Activated naive CD4-positive, alpha-beta T cell treated with anti-CD3 and anti-CD28 coated beads for 36 hours (primary cell): ENCODE measurements at regions of chr4 and their contacts with region 1.

Region 1: DNA sequence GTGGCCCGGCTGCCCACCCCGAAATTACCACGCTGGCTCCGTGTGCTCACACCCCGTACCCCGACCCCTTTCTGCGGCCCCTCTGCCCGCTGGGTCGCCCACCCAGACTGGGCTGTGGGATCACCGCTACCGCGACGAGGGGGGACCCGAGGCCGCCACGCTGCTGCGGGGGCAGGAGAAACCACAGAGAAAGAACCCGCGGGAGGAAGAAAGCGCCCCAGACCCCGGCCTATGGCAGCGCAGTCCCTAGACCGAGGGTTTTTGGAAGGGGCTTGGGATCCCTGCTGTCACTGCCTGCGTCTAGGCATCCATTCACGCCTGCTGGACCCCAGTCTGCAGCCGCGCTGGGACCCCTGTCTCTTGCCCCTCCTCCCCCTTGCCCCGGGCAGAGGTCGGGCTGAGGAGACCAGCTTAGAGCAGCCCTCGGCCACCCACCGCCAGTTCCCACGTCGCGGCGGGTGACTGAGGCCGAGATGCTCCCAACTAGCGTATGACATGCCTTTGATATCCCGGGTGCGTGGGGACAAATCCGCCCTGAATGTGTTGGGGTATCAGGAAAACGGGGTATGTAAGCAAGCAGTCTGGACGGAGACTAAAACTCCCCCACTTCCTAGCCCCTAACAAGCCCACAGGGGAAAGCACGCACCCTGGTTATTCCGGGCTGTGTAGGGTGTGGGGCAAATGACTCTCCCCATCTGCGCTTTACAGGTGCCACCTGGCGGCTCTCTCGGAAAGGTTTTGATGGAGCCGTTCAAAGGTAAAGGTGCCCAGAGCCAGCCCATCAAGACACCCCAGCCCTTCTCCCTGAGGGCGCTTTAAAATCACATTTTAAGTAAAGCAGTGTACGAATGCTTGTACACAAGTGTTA is 862 bp upstream of the INPP4B start:
- DNase-seq: peak; percentile 90
- H3K4me3 Mint-ChIP-seq: peak overlapping the region; percentile 86
- H3K27ac Mint-ChIP-seq: peak overlapping the region; percentile 84
- H3K4me1 Mint-ChIP-seq: peaks cover 15% of the 10 kb centered on the region
- H3K27me3 Mint-ChIP-seq: no peaks in the 10 kb centered on the region

Region 2: GRCh38 chr4:140861359-140862176 is 1985.4 kb before region 1 on chr4:
- CTCF ChIA-PET with region 1: no interaction called
- intact Hi-C with region 1: loop called (anchors 1 kb)
- DNase-seq: peak; percentile 79
- H3K4me3 Mint-ChIP-seq: no peak overlapping the region
- H3K27ac Mint-ChIP-seq: no peak overlapping the region
- H3K4me1 Mint-ChIP-seq: no peaks in the 10 kb centered on the region
- H3K27me3 Mint-ChIP-seq: no peaks in the 10 kb centered on the region

Region 3: DNA sequence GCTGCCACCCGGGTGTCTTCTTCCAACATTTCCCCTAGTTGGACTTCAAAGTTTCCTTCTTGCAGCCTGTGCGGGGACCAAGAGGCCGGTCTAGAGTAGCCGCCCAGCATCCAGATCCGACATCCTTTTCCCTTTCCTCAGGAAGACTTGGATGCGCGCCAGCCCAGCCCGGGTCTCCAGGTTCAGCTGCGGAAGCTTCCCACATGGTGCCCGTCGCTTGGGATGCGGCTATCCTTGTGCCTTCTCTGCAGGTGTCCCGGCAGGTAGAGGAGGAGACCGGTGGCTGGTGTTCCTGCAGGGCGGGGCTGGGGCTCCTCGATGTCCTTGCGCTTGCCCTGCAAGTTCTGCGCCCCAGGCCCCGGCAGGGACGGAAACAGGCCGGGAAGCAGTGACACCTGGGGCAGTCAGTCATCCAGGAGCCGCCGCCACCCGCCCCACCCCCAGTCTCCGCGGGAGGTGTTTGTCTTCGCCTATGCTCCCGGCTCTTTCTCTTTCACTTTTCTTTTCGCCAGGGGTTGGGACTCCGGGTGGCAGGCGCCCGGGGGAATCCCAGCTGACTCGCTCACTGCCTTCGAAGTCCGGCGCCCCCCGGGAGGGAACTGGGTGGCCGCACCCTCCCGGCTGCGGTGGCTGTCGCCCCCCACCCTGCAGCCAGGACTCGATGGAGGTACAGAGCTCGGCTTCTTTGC is 1210.7 kb before region 1 on chr4 and contains the start of gene IL15:
- CTCF ChIA-PET with region 1: no interaction called
- intact Hi-C with region 1: loop called (anchors 5 kb)
- DNase-seq: peak; percentile 86
- H3K4me3 Mint-ChIP-seq: peak within 1 kb of the TSS; percentile 89
- H3K27ac Mint-ChIP-seq: no peak within 1 kb of the TSS
- H3K4me1 Mint-ChIP-seq: peaks cover 10% of the 10 kb centered on the region
- H3K27me3 Mint-ChIP-seq: peaks cover 9% of the 10 kb centered on the region
- total RNA-seq, gene IL15: 0.19 to 0.52 TPM

Region 4: DNA sequence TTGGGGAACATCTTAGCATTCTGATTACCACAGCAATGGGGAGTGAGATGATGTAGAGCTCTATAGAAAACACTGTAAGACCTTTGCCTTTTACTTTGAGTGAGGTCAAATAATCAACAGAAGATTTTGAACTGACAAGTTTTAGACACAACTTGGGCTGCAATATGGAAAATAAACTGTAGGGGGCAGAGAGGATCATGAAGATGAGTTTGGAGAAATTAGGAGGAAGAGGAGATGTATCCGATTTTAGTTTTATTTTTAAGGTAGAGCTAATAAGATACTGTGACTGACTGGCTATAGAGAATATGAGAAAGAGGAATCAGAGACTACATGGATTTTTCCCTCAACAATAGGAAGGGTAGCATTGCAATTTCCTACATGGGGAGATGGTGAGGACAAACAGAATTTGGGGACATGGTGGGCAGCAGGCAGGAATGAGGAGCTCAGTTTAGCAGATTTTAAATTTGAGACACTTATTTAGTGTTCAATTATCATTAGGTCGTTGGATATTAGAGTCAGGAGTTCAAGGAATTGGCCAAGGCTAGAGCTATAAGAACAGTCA is 564.0 kb before region 1 on chr4:
- CTCF ChIA-PET with region 1: interaction called, 3 read pairs
- intact Hi-C with region 1: loop called (anchors 1 kb)
- DNase-seq: peak; percentile 60
- H3K4me3 Mint-ChIP-seq: no peak overlapping the region
- H3K27ac Mint-ChIP-seq: no peak overlapping the region
- H3K4me1 Mint-ChIP-seq: peaks cover 29% of the 10 kb centered on the region
- H3K27me3 Mint-ChIP-seq: no peaks in the 10 kb centered on the region

Region 5: GRCh38 chr4:142549726-142550463 is 297.1 kb before region 1 on chr4:
- CTCF ChIA-PET with region 1: no interaction called
- intact Hi-C with region 1: loop called (anchors 2 kb)
- DNase-seq: no peak
- H3K4me3 Mint-ChIP-seq: no peak overlapping the region
- H3K27ac Mint-ChIP-seq: peak overlapping the region; percentile 60
- H3K4me1 Mint-ChIP-seq: peaks cover 71% of the 10 kb centered on the region
- H3K27me3 Mint-ChIP-seq: no peaks in the 10 kb centered on the region

Region 6: GRCh38 chr4:142824368-142824767 is 22.6 kb before region 1 on chr4:
- CTCF ChIA-PET with region 1: interaction called, 3 read pairs
- intact Hi-C with region 1: loop called (anchors 1 kb)
- DNase-seq: no peak
- H3K4me3 Mint-ChIP-seq: peak overlapping the region; percentile 5
- H3K27ac Mint-ChIP-seq: peak overlapping the region; percentile 86
- H3K4me1 Mint-ChIP-seq: peaks cover 18% of the 10 kb centered on the region
- H3K27me3 Mint-ChIP-seq: no peaks in the 10 kb centered on the region

Region 7: DNA sequence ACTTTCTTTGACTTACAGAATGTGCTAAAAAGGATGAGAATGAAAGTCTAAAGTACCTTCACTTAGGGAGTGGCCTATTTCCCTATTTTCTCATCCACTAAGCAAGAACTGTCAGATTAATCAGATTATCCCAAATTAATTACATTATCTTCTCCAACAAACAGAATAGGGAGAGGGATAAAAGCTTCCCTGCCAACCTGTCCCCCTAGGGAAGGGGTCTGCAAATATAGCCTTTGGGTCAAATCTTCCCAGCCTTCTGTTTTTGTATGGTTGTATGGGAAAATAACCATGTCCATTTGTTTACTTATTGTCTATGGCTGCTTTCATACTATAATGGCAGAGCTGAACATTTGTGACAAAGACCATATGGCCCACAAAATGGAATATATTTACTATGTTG is 280.7 kb after region 1 on chr4:
- CTCF ChIA-PET with region 1: no interaction called
- intact Hi-C with region 1: no loop called
- DNase-seq: no peak
- H3K4me3 Mint-ChIP-seq: no peak overlapping the region
- H3K27ac Mint-ChIP-seq: no peak overlapping the region
- H3K4me1 Mint-ChIP-seq: no peaks in the 10 kb centered on the region
- H3K27me3 Mint-ChIP-seq: peaks cover 6% of the 10 kb centered on the region